CD4-positive, alpha-beta T cell (primary cell): ENCODE measurements at regions of chr6 and their contacts with region 1.

Region 1: DNA sequence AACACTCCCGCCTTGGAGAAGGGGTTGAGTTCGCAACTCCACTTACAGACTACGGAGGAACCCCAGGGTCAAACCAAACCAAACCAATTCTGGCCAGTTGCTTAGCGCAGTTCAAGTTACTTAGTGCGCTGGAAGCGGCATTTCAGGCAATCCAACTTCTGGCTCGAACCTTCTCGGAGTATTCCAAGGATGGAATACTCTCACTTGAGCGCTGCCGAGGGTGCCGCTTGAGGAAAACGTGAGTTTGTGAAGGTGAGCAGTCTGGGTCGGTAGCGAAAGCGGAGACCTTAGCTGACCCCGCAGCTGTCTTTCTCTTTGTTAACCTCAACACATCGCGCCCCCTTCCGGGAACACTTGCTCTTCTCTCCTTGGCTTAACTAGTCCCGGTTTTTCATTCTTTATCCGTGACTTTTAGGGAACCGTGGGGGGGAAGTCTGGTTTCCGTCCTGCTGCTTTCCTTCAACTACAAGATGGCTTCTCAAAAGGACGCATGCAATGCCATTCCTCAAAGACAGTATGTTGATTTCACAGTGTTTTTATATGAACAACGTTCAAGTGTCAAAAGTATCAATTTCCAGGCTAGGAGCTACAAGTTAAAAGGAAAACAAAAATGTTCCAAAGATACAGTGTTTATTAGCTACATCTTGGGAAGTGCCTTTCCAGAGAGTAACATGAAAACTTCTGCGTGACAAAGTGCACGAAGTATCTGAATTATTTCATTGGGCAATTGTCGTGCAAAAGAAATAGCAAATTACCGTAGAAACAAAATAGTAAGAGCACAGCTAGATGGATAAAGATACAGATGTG is 742 bp upstream of the PNISR start:
- DNase-seq: peak; percentile 27 to 79 (median 49)
- ATAC-seq: peak; percentile 44
- H3K4me3 ChIP-seq: peak overlapping the region; percentile 72
- H3K4me3 Mint-ChIP-seq: peak overlapping the region; percentile 100
- H3K27ac ChIP-seq: peak overlapping the region; percentile 99
- H3K27ac Mint-ChIP-seq: peak overlapping the region; percentile 97
- H3K4me1 ChIP-seq: peaks cover 32% of the 10 kb centered on the region
- H3K4me1 Mint-ChIP-seq: peaks cover 58% of the 10 kb centered on the region
- H3K27me3 ChIP-seq: no peaks in the 10 kb centered on the region
- H3K27me3 Mint-ChIP-seq: no peaks in the 10 kb centered on the region
- CTCF ChIP-seq: no peak

Region 2: DNA sequence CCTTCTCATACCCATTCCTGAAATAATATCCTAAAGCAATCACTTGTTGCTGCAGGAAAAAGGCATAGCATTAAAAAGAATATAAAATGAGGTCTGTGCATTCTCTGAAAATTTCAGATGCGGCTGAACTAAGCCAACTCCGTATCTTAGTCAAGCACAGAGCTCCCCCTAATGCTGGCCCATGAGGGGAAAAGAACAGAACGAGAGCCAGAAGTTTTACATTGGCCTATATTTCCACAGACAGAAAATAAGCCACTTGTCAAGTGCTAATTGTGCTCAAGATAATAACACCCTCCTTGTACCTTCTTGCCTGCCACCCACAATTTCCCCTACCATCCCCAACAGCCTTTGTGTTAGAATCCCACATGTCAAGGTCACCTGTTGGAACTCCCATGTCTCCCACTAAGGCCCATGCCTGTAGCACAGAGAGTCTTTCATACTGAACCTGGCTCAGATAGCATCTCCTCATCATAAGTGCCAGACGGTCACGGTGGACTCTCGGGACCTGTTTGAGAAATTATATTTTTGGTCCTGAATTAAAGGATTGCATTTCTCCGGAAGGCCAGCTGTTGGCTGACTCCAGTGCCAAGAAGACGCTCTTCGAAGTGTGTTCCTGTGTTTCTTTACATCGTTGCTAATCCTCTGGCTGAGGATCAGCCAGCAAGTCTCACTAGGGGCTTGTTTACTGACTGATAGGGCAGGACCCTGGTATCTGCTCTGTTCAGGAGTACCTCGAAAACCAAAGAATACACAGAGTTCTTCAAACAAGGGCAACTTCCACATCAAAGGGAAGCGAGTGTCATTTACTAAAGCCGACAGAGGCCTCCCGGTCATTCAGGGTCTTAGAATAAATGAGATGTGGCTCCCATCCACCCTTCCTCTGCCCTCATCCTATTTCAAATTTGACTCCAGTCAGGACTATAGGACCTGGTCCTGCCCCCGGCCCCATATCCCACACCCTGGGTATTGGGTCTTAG is 294.7 kb before region 1 on chr6:
- CTCF ChIA-PET with region 1: no interaction called
- POLR2A ChIA-PET with region 1: no interaction called
- intact Hi-C with region 1: no loop called
- DNase-seq: no peak
- ATAC-seq: no peak
- H3K4me3 ChIP-seq: no peak overlapping the region
- H3K4me3 Mint-ChIP-seq: no peak overlapping the region
- H3K27ac ChIP-seq: no peak overlapping the region
- H3K27ac Mint-ChIP-seq: no peak overlapping the region
- H3K4me1 ChIP-seq: no peaks in the 10 kb centered on the region
- H3K4me1 Mint-ChIP-seq: no peaks in the 10 kb centered on the region
- H3K27me3 ChIP-seq: no peaks in the 10 kb centered on the region
- H3K27me3 Mint-ChIP-seq: peaks cover 6% of the 10 kb centered on the region
- CTCF ChIP-seq: no peak

Region 3: GRCh38 chr6:99330159-99330558 is 95.7 kb before region 1 on chr6:
- CTCF ChIA-PET with region 1: interaction called, 4 read pairs
- POLR2A ChIA-PET with region 1: interaction called, 4 read pairs
- intact Hi-C with region 1: loop called in 1 of 2 experiments (anchors 5 kb)
- DNase-seq: peak; percentile 6 to 74 (median 30)
- ATAC-seq: peak; percentile 54
- H3K4me3 ChIP-seq: no peak overlapping the region
- H3K4me3 Mint-ChIP-seq: no peak overlapping the region
- H3K27ac ChIP-seq: no peak overlapping the region
- H3K27ac Mint-ChIP-seq: no peak overlapping the region
- H3K4me1 ChIP-seq: no peaks in the 10 kb centered on the region
- H3K4me1 Mint-ChIP-seq: no peaks in the 10 kb centered on the region
- H3K27me3 ChIP-seq: peaks cover 0 to 5% of the 10 kb centered on the region in 2 experiments
- H3K27me3 Mint-ChIP-seq: peaks cover 14% of the 10 kb centered on the region
- CTCF ChIP-seq: peak; percentile 72

Region 4: DNA sequence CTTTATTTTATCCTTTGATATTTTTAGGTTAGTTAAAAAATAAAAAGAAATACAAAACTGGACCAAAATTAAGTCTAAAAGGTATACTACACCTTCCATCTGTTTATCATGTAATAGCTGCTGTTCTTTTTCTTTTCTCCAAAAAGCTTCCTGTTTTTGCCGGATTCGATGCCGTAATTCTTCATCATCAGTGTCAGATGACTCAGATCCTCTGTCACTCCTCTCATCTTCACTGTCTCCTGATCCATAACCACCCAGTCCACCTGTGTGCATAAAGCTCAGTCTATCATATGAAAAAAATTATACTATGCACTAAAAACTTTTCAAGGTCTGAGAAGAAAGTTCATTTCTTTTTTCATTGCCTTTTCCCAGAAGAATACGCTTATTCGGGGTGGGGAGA is 23.4 kb before region 1 on chr6:
- CTCF ChIA-PET with region 1: interaction called, 5 read pairs
- POLR2A ChIA-PET with region 1: interaction called, 17 read pairs
- intact Hi-C with region 1: no loop called
- DNase-seq: no peak
- ATAC-seq: no peak
- H3K4me3 ChIP-seq: no peak overlapping the region
- H3K4me3 Mint-ChIP-seq: no peak overlapping the region
- H3K27ac ChIP-seq: no peak overlapping the region
- H3K27ac Mint-ChIP-seq: no peak overlapping the region
- H3K4me1 ChIP-seq: no peaks in the 10 kb centered on the region
- H3K4me1 Mint-ChIP-seq: no peaks in the 10 kb centered on the region
- H3K27me3 ChIP-seq: no peaks in the 10 kb centered on the region
- H3K27me3 Mint-ChIP-seq: no peaks in the 10 kb centered on the region
- CTCF ChIP-seq: no peak

Region 5: DNA sequence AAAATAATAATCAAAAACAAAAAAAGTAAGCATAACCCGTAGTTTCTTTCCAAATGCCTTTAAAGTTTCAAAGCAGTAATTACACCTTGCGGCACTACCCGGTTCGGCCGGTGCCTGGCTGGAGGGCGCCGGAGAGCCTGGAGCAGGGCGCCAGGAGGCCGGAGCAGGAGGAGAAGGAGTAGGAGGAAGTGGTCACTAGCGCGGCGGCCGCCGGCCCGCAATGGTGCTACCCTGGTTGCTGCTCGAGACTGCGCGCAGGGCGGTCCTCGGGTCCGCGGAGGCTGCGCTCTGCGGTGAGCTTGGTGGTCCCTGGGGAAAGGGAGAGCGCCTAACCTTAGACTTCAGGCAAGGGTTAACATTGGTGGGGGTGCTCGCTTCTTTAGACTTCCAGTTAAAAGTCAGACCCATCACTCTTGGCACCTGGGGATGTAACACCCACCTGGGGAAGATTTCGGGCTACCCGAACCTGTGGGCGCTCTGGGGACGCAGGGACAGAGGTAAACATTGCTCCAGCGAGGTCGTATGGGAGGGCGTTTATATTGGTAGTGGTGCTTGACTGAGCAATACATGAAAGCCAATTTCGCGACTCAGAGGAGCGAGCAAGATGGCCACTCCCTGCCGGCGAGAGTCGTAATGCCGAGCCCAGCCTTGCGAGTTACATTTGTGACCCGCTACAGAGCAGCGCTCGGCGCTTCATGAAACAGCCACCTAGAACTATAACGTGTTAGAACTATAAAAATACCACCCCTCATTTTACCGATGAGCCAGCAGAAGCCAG is 95.2 kb after region 1 on chr6:
- CTCF ChIA-PET with region 1: no interaction called
- POLR2A ChIA-PET with region 1: interaction called, 22 read pairs
- intact Hi-C with region 1: loop called in 1 of 2 experiments (anchors 5 kb)
- DNase-seq: peak; percentile 44 to 87 (median 58)
- ATAC-seq: peak; percentile 91
- H3K4me3 ChIP-seq: peak overlapping the region; percentile 78
- H3K4me3 Mint-ChIP-seq: peak overlapping the region; percentile 95
- H3K27ac ChIP-seq: peak overlapping the region; percentile 31 to 43
- H3K27ac Mint-ChIP-seq: peak overlapping the region; percentile 86
- H3K4me1 ChIP-seq: peaks cover 12% of the 10 kb centered on the region
- H3K4me1 Mint-ChIP-seq: peaks cover 40% of the 10 kb centered on the region
- H3K27me3 ChIP-seq: no peaks in the 10 kb centered on the region
- H3K27me3 Mint-ChIP-seq: no peaks in the 10 kb centered on the region
- CTCF ChIP-seq: peak; percentile 95

Region 6: GRCh38 chr6:99543968-99544367 is 118.1 kb after region 1 on chr6:
- CTCF ChIA-PET with region 1: no interaction called
- POLR2A ChIA-PET with region 1: no interaction called
- intact Hi-C with region 1: no loop called
- DNase-seq: no peak
- ATAC-seq: no peak
- H3K4me3 ChIP-seq: no peak overlapping the region
- H3K4me3 Mint-ChIP-seq: no peak overlapping the region
- H3K27ac ChIP-seq: no peak overlapping the region
- H3K27ac Mint-ChIP-seq: no peak overlapping the region
- H3K4me1 ChIP-seq: no peaks in the 10 kb centered on the region
- H3K4me1 Mint-ChIP-seq: peaks cover 4% of the 10 kb centered on the region
- H3K27me3 ChIP-seq: no peaks in the 10 kb centered on the region
- H3K27me3 Mint-ChIP-seq: no peaks in the 10 kb centered on the region
- CTCF ChIP-seq: no peak